ENCODE measurements at regions of chr6 and their contacts with region 1.

Region 1: GRCh38 chr6:130697995-130698535 is 129.1 kb upstream of the SMLR1 start:
- DNase-seq: peak; percentile 74
- H3K4me3 Mint-ChIP-seq: no peak overlapping the region
- H3K27ac Mint-ChIP-seq: no peak overlapping the region
- H3K4me1 Mint-ChIP-seq: peaks cover 22% of the 10 kb centered on the region
- H3K27me3 Mint-ChIP-seq: no peaks in the 10 kb centered on the region

Region 2: GRCh38 chr6:130307752-130308361 is 390.2 kb before region 1 on chr6:
- CTCF ChIA-PET with region 1: interaction called, 10 read pairs
- POLR2A ChIA-PET with region 1: no interaction called
- intact Hi-C with region 1: no loop called
- DNase-seq: no peak
- H3K4me3 Mint-ChIP-seq: no peak overlapping the region
- H3K27ac Mint-ChIP-seq: no peak overlapping the region
- H3K4me1 Mint-ChIP-seq: no peaks in the 10 kb centered on the region
- H3K27me3 Mint-ChIP-seq: no peaks in the 10 kb centered on the region

Region 3: DNA sequence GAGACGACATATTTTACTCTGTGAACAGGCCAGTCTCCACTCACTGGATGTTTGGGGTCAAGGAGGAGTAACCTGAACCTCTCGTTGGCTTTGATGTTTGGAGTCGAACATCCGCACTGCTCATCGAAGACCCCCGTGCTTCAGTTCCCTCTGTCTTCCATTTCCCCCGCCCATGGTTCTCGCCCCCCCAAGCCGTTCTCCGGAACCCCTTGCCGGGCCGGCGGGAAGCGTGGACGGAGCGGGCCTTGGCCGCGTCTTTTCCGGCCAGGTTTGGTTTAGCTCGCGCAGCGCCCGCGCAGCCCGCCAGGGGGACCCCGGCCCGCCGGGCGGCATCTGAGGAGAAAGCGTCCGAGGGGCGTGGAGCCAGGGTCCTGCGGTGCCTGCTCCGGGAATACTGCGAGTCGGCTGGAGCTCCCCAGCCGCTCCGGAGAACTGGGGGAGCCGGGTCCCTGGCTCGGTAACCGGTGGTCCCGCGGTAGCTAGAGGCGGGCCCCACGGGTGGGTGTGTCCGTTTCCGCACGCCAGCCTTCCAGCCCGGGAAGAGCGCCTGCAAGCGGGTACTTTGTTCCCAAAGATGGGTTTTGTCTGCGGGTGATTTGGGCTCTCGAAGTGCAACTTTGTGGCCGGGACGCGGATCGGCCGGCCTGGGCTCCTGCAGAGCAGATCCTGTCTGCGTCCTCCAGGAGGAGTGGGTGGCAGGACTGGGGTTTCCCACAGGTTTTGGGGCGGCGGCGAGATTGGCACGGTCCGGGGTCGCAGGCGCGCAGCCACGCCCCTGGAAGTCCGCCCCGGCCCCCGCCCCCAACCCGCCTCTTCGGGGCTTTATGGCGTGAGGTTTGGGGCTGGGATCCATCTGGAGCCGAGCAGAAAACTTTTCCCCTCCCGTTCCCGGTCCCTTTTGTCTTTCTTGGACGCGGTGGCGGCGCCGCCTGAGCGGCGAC is 332.6 kb before region 1 on chr6 and contains the start of gene TMEM200A:
- CTCF ChIA-PET with region 1: interaction called, 27 read pairs
- POLR2A ChIA-PET with region 1: no interaction called
- intact Hi-C with region 1: loop called (anchors 1 kb)
- DNase-seq: peak; percentile 61
- H3K4me3 Mint-ChIP-seq: peak within 1 kb of the TSS; percentile 76
- H3K27ac Mint-ChIP-seq: no peak within 1 kb of the TSS
- H3K4me1 Mint-ChIP-seq: peaks cover 19% of the 10 kb centered on the region
- H3K27me3 Mint-ChIP-seq: peaks cover 7% of the 10 kb centered on the region
- total RNA-seq, gene TMEM200A: 0.34 to 0.78 TPM

Region 4: DNA sequence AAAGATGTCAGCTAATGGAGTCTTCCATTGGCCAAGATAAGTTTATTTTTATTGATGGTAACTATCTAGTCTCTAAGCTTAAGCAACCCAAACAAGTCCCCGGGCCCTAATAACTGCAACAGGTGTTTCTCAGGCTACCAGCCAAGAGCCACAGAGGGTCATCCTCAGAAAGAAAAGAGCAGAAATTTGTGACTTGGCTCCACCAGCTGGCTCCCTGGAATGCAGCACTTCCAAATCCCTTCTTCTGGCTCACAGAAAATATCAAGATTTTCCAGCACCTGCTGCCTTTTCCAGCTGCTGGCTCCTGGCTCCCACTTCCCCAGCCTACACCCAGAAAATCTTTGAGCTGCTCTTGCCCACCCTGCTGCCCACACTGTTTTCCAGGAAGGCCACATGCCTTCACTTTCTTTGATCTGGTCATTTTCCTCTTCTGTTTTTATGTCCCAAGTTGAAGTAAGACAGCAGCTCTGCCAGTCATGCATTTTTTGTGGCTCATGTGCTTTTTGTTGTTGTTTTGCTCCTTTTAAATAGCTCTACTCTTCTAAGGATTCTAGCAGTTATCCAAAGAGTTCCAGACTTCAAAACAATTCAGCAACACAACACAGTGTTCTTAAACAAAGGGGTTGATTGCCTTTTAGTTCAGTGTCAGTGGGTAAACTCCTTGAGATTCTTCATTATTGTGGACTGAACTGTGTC is 21.8 kb before region 1 on chr6:
- CTCF ChIA-PET with region 1: interaction called, 12 read pairs
- POLR2A ChIA-PET with region 1: interaction called, 4 read pairs
- intact Hi-C with region 1: no loop called
- DNase-seq: no peak
- H3K4me3 Mint-ChIP-seq: no peak overlapping the region
- H3K27ac Mint-ChIP-seq: no peak overlapping the region
- H3K4me1 Mint-ChIP-seq: peaks cover 14% of the 10 kb centered on the region
- H3K27me3 Mint-ChIP-seq: no peaks in the 10 kb centered on the region

Region 5: DNA sequence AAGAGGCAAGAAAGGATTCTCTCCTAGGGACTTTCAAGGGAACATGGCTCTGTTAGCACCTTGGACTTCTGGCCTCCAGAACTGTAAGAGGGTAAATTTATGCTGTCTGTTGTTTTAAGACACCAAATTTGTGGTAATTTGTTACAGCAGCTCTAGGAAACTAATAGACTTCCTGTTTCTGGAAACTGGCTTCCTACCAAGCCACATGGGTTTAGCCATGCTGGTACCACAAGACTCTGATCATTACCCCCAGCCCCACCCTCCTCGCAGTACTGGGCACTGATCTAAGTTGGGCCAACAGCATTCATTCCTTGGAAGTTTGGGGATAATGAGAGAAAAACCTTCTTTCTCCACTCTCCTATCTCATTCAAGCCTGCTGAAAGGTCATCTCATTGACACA is 19.6 kb after region 1 on chr6:
- CTCF ChIA-PET with region 1: interaction called, 20 read pairs
- POLR2A ChIA-PET with region 1: no interaction called
- intact Hi-C with region 1: no loop called
- DNase-seq: no peak
- H3K4me3 Mint-ChIP-seq: no peak overlapping the region
- H3K27ac Mint-ChIP-seq: no peak overlapping the region
- H3K4me1 Mint-ChIP-seq: peaks cover 14% of the 10 kb centered on the region
- H3K27me3 Mint-ChIP-seq: no peaks in the 10 kb centered on the region

Measured in activated CD4-positive, alpha-beta memory T cell treated with anti-CD3 and anti-CD28 coated beads for 36 hours (primary cell).